ENCODE measurements at regions of chr9 and their contacts with region 1.

Region 1: DNA sequence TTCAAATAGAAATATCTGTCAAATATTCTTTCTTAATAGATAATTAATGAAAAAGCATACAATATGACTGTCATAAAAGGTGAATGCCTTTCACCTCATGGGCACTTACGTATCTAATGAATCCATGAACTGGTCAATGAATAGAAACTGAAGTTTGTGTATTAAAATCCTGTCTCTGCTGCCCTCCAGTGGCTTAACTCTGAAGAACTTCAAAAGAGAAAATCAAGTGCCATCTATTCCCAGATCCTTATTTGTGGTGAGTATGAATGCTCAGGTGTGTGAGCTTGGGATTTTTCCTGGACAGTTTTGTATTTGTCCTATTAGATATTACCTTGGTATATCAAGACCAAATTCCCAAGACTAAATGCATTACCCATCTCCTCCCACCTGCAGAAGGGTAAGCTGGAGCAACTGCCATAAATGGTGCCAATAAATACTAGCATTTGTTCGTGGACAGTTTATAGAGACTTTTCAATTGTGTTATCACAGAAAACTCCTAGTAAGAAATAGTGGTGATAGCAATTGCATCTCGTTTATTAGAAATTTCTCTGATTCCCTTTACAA is 44.0 kb upstream of the SVEP1 start:
- DNase-seq: no peak
- ATAC-seq: no peak
- H3K4me3 Mint-ChIP-seq: no peak overlapping the region
- H3K27ac Mint-ChIP-seq: no peak overlapping the region
- H3K4me1 Mint-ChIP-seq: no peaks in the 10 kb centered on the region
- H3K27me3 Mint-ChIP-seq: no peaks in the 10 kb centered on the region
- CTCF ChIP-seq: no peak

Region 2: GRCh38 chr9:109244157-109245132 is 1379.1 kb before region 1 on chr9:
- CTCF ChIA-PET with region 1: no interaction called
- POLR2A ChIA-PET with region 1: no interaction called
- intact Hi-C with region 1: loop called (anchors 1 kb)
- DNase-seq: peak; percentile 42
- ATAC-seq: peak; percentile 88
- H3K4me3 Mint-ChIP-seq: no peak overlapping the region
- H3K27ac Mint-ChIP-seq: no peak overlapping the region
- H3K4me1 Mint-ChIP-seq: peaks cover 4% of the 10 kb centered on the region
- H3K27me3 Mint-ChIP-seq: peaks cover 13% of the 10 kb centered on the region
- CTCF ChIP-seq: peak; percentile 48

Region 3: GRCh38 chr9:110427497-110428104 is 195.9 kb before region 1 on chr9:
- CTCF ChIA-PET with region 1: no interaction called
- POLR2A ChIA-PET with region 1: no interaction called
- intact Hi-C with region 1: loop called (anchors 5 kb)
- DNase-seq: no peak
- ATAC-seq: no peak
- H3K4me3 Mint-ChIP-seq: no peak overlapping the region
- H3K27ac Mint-ChIP-seq: no peak overlapping the region
- H3K4me1 Mint-ChIP-seq: no peaks in the 10 kb centered on the region
- H3K27me3 Mint-ChIP-seq: peaks cover 2% of the 10 kb centered on the region
- CTCF ChIP-seq: no peak

Region 4: DNA sequence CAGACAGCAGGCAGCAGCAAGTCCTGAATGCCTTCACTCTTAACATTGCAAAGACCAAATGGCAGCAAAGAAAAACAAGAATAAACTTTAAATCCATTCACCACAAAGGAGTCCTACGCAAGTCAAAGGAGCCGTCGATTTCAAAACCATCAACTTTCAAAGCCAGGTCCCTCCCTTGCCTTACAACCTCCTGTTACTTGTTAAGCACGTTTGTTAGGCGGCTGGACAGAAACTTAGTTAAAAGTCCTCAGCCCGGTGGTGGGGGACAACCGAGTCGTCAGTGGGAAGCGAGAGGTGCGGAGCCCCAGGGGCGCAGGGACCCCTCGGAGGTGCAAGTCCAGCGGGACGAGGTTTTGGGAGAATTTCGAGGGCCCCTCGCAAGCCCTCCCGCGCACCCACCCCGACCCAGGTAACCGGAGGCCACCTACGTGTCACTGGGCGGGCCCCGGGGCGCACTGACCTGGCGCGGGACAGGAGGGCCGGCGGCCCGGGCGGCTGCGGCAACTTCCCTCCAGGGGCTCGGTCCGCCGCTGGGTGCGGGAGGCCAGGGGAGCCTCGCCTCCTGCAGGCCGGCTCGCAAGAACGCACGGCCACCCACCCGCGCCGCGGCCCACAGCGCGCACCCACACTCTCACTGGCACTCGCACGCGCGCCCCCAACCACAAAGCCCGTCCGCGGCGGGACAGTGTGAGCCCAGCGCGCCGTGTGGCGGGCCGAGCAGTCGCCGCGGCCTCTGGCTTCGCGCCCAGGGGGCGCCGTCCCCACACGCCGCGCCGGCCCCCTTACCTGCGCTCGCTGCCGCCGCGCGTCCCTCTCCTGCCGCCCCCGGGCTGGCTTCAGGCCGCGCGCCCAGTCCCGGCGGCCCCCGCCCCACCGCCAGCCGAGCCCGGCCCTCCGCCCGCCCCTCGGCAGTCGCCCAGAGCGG is 414.1 kb after region 1 on chr9:
- CTCF ChIA-PET with region 1: no interaction called
- POLR2A ChIA-PET with region 1: no interaction called
- intact Hi-C with region 1: no loop called
- DNase-seq: no peak
- ATAC-seq: no peak
- H3K4me3 Mint-ChIP-seq: no peak overlapping the region
- H3K27ac Mint-ChIP-seq: no peak overlapping the region
- H3K4me1 Mint-ChIP-seq: peaks cover 14% of the 10 kb centered on the region
- H3K27me3 Mint-ChIP-seq: peaks cover 47% of the 10 kb centered on the region
- CTCF ChIP-seq: no peak